Activated naive CD4-positive, alpha-beta T cell treated with anti-CD3 and anti-CD28 coated beads, Interleukin-2, amount 10 ng/mL, durations not matched to agents 7 days and 5 days (primary cell): ENCODE measurements at regions of chr12 and their contacts with region 1.

Region 1: GRCh38 chr12:50174971-50175715 is 8.0 kb upstream of the CERS5 start:
- DNase-seq: no peak
- H3K4me3 Mint-ChIP-seq: no peak overlapping the region
- H3K27ac Mint-ChIP-seq: peak overlapping the region; percentile 4
- H3K4me1 Mint-ChIP-seq: peaks cover 1% of the 10 kb centered on the region
- H3K27me3 Mint-ChIP-seq: no peaks in the 10 kb centered on the region

Region 2: DNA sequence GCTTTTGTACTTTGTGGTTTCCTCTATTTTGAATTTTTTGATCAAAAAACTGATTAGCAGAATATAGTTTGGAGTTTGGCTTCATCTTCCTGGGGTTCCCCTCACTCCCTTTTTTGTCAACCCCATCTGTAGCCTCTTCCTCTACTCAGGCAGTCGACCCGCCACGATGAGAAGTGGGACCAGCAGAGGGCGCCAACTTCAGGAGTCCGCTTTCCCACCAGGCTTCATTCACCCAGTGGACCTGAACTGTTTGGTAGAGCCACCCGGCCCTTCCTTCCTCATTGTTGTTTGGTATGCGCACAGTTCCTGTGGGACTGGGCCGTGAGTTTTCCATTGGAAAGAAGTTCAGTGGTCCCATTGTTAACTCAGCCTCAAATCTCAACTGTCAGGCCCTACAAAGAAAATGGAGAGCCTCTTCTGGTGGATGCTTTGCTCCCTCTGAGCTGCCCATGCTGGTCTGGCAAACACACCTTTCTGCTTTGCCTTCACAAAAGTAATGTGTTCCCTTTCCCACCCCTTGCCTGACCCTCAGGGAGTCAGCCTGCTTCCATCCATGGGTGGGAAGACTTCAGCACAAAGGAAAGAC is 412.0 kb before region 1 on chr12:
- CTCF ChIA-PET with region 1: no interaction called
- DNase-seq: peak; percentile 87
- H3K4me3 Mint-ChIP-seq: peak overlapping the region; percentile 19
- H3K27ac Mint-ChIP-seq: peak overlapping the region; percentile 91
- H3K4me1 Mint-ChIP-seq: peaks cover 44% of the 10 kb centered on the region
- H3K27me3 Mint-ChIP-seq: peaks cover 7% of the 10 kb centered on the region

Region 3: DNA sequence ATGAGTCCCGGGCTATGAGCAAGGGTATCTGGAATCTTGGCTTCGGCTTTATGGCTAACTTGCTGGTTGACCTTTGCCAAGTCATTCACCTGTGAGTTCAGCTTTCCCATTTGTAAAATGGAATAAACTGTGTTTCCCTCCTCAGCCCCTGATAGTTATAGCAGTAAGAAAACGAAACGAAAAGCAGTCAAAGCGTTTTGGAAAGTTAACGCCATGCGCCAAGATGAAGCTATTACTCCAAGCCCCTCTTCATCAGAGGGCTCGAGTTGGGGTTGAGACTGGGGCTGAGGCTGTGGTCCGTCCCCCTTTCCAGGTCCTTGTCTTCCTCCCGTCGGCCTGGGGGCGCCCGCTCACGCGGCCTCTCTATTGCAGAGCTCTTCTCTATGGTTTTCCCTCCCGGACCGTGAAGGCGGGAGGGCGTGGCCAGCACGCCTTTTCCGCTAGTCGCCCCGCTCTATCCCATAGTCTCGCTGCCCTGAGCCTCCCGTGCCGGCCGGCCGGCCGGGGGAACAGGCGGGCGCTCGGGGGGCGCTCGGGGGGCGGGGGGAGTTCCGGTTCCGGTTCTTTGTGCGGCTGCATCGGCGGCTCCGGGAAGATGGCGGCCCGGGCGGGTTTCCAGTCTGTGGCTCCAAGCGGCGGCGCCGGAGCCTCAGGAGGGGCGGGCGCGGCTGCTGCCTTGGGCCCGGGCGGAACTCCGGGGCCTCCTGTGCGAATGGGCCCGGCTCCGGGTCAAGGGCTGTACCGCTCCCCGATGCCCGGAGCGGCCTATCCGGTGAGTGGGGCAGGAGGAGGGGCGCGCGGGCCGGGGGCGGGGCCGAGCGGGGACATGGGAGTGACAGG is 90.1 kb before region 1 on chr12 and contains the start of gene SMARCD1:
- CTCF ChIA-PET with region 1: interaction called, 20 read pairs
- DNase-seq: peak; percentile 88
- H3K4me3 Mint-ChIP-seq: peak within 1 kb of the TSS; percentile 92
- H3K27ac Mint-ChIP-seq: peak within 1 kb of the TSS; percentile 95
- H3K4me1 Mint-ChIP-seq: peaks cover 30% of the 10 kb centered on the region
- H3K27me3 Mint-ChIP-seq: peaks cover 6% of the 10 kb centered on the region

Region 4: GRCh38 chr12:50187084-50187900 is 12.1 kb after region 1 on chr12:
- CTCF ChIA-PET with region 1: interaction called, 12 read pairs
- DNase-seq: no peak
- H3K4me3 Mint-ChIP-seq: no peak overlapping the region
- H3K27ac Mint-ChIP-seq: peak overlapping the region; percentile 73
- H3K4me1 Mint-ChIP-seq: peaks cover 33% of the 10 kb centered on the region
- H3K27me3 Mint-ChIP-seq: no peaks in the 10 kb centered on the region